CD4-positive, alpha-beta memory T cell (primary cell): ENCODE measurements at regions of chr6 and their contacts with region 1.

Region 1: DNA sequence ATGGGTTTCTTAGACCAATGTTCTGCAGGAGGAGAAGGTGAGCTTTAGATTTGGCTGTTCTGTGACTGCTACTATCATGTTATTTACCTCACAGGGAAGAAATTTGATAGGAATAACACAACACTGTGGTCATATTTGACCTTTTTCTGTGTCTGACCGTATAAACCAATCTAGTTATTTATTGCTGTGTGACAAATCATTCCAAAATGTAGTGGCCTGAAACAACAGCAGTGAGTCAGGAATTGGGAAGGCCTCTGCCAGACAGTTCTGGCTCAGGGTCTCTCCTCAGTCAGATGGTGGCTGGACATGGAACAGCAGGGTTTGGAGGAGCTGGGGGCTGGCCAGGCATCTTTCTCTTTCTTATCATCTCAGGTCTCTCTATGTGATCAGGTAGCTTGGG is 33.0 kb downstream of the RIPOR2 start:
- DNase-seq: no peak
- H3K4me3 ChIP-seq: no peak overlapping the region
- H3K4me3 Mint-ChIP-seq: peak overlapping the region in 6 of 8 donors; percentile 16 to 85 (median 63)
- H3K27ac ChIP-seq: no peak overlapping the region
- H3K27ac Mint-ChIP-seq: peak overlapping the region; percentile 73 to 94 (median 89)
- H3K4me1 ChIP-seq: peaks cover 99% of the 10 kb centered on the region
- H3K4me1 Mint-ChIP-seq: peaks cover 81 to 99% (median 92%) of the 10 kb centered on the region in 4 donors
- H3K27me3 ChIP-seq: no peaks in the 10 kb centered on the region
- H3K27me3 Mint-ChIP-seq: no peaks in the 10 kb centered on the region

Region 2: GRCh38 chr6:24689964-24690363 is 212.8 kb before region 1 on chr6:
- CTCF ChIA-PET with region 1: no interaction called
- POLR2A ChIA-PET with region 1: no interaction called
- intact Hi-C with region 1: no loop called
- DNase-seq: no peak
- H3K4me3 ChIP-seq: no peak overlapping the region
- H3K4me3 Mint-ChIP-seq: no peak overlapping the region
- H3K27ac ChIP-seq: no peak overlapping the region
- H3K27ac Mint-ChIP-seq: no peak overlapping the region
- H3K4me1 ChIP-seq: no peaks in the 10 kb centered on the region
- H3K4me1 Mint-ChIP-seq: peaks cover 0 to 8% (median 4%) of the 10 kb centered on the region in 4 donors
- H3K27me3 ChIP-seq: no peaks in the 10 kb centered on the region
- H3K27me3 Mint-ChIP-seq: no peaks in the 10 kb centered on the region

Region 3: DNA sequence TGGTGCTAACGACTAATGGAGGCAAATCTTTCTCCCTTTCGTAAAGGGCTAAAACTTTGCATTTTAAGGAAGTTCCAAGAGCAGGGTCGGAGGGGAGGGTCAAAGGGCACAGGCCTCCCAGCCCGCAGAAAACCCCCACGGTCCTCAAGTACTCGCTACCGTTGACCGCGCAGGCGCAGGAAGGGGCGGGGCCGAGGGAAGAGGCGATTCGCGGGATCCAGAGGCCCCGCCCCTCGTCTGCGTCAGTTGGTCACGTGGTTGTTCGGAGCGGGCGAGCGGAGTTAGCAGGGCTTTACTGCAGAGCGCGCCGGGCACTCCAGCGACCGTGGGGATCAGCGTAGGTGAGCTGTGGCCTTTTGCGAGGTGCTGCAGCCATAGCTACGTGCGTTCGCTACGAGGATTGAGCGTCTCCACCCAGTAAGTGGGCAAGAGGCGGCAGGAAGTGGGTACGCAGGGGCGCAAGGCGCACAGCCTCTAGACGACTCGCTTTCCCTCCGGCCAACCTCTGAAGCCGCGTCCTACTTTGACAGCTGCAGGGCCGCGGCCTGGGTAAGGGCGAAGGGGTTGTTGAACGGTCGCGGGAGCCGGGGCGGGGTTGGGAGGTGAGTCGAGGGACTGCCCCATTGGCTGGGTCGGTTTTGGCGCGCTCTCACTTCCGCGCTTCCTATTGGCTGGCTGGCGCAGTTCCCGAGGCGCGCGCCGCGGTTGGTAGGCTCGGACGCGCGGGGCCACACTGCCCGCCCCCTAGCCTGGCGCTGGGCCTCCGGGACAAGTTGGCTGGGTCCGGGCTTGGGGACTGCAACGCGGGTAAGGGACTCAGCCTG is 127.9 kb before region 1 on chr6 and contains the start of gene GMNN:
- CTCF ChIA-PET with region 1: no interaction called
- POLR2A ChIA-PET with region 1: no interaction called
- intact Hi-C with region 1: no loop called
- DNase-seq: peak; percentile 93 to 97 (median 95)
- H3K4me3 ChIP-seq: peak within 1 kb of the TSS; percentile 95 to 98
- H3K4me3 Mint-ChIP-seq: peak within 1 kb of the TSS; percentile 98 to 99 (median 99)
- H3K27ac ChIP-seq: peak within 1 kb of the TSS; percentile 85
- H3K27ac Mint-ChIP-seq: peak within 1 kb of the TSS; percentile 97 to 98 (median 98)
- H3K4me1 ChIP-seq: peaks cover 30% of the 10 kb centered on the region
- H3K4me1 Mint-ChIP-seq: peaks cover 16 to 31% (median 18%) of the 10 kb centered on the region in 4 donors
- H3K27me3 ChIP-seq: no peaks in the 10 kb centered on the region
- H3K27me3 Mint-ChIP-seq: no peaks in the 10 kb centered on the region
- total RNA-seq, gene GMNN: 6.1 to 6.7 TPM

Region 4: DNA sequence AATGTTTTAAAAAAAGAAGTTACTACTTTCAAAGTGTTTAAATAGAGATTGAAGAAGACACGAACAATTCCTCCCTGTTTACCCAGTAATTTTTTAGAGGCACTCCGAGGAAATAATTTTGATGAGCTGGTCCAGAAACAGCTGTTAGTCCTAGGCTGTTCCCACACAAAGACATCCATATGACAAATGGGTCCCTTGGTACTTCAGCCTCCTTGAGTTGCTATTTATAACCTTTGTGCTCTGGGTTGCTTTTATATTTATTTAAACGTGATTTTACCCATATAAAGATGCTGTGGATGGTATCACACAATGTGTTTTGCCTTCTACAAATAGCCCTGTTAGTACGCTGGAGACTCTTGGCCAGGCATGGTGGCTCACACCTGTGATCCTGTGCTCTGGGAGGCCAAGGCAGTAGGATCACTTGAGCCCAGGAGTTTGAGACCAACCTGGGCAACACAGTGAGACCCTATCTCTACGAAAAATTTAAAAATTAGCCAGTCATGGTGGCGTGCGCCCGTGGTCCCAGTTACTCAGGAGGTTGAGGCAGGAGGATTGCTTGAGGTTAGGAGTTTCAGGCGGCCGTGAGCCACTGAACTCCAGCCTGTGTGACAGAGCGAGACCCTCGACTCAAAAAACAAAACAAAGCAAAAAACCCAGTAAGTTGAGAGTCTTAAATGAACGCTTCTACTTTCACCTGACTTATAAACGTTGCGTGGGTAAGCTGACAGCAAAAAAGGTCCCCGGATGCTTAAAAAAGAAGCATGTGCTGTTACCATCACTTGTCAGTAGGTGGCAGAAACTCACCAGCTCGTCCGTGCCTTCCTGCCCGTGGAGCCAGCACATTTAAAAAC is 47.2 kb before region 1 on chr6:
- CTCF ChIA-PET with region 1: interaction called, 17 read pairs
- POLR2A ChIA-PET with region 1: interaction called, 3 read pairs
- intact Hi-C with region 1: no loop called
- DNase-seq: peak; percentile 76 to 82 (median 77)
- H3K4me3 ChIP-seq: no peak overlapping the region
- H3K4me3 Mint-ChIP-seq: peak overlapping the region in 5 of 8 donors; percentile 1 to 87 (median 26)
- H3K27ac ChIP-seq: peak overlapping the region; percentile 61
- H3K27ac Mint-ChIP-seq: peak overlapping the region; percentile 82 to 92 (median 90)
- H3K4me1 ChIP-seq: peaks cover 53% of the 10 kb centered on the region
- H3K4me1 Mint-ChIP-seq: peaks cover 48 to 58% (median 50%) of the 10 kb centered on the region in 4 donors
- H3K27me3 ChIP-seq: no peaks in the 10 kb centered on the region
- H3K27me3 Mint-ChIP-seq: no peaks in the 10 kb centered on the region

Region 5: GRCh38 chr6:24864343-24864742 is 38.4 kb before region 1 on chr6:
- CTCF ChIA-PET with region 1: no interaction called
- POLR2A ChIA-PET with region 1: interaction called, 4 read pairs
- intact Hi-C with region 1: loop called (anchors 5 kb)
- DNase-seq: no peak
- H3K4me3 ChIP-seq: no peak overlapping the region
- H3K4me3 Mint-ChIP-seq: peak overlapping the region in 4 of 8 donors; percentile 18 to 63 (median 40)
- H3K27ac ChIP-seq: peak overlapping the region; percentile 14
- H3K27ac Mint-ChIP-seq: peak overlapping the region; percentile 60 to 88 (median 82)
- H3K4me1 ChIP-seq: peaks cover 95% of the 10 kb centered on the region
- H3K4me1 Mint-ChIP-seq: peaks cover 65 to 98% (median 79%) of the 10 kb centered on the region in 4 donors
- H3K27me3 ChIP-seq: no peaks in the 10 kb centered on the region
- H3K27me3 Mint-ChIP-seq: no peaks in the 10 kb centered on the region

Region 6: DNA sequence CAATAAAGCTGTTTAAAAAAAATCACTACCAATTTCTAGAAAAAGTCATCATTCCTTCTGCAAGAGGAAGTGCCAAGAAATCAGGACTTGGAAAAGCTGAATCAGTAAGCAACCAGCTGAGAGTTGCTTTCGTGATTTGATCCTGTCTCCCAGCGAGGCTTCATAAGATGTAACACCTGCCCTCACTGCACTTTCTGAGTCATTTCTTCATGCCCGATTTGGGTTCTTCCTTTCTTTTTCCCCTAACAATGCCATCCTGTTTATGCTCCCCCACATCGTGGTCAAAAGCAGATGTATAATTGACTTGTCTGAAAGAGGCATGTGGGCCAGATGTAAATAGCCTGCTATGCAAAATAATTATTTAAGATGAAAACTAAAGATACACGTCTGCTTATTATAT is 19.2 kb before region 1 on chr6:
- CTCF ChIA-PET with region 1: interaction called, 5 read pairs
- POLR2A ChIA-PET with region 1: interaction called, 19 read pairs
- intact Hi-C with region 1: loop called (anchors 2 kb)
- DNase-seq: peak in 1 of 5 donors; percentile 64
- H3K4me3 ChIP-seq: no peak overlapping the region
- H3K4me3 Mint-ChIP-seq: peak overlapping the region in 6 of 8 donors; percentile 28 to 80 (median 68)
- H3K27ac ChIP-seq: peak overlapping the region; percentile 42
- H3K27ac Mint-ChIP-seq: peak overlapping the region; percentile 49 to 94 (median 88)
- H3K4me1 ChIP-seq: peaks cover 96% of the 10 kb centered on the region
- H3K4me1 Mint-ChIP-seq: peaks cover 59 to 97% (median 80%) of the 10 kb centered on the region in 4 donors
- H3K27me3 ChIP-seq: no peaks in the 10 kb centered on the region
- H3K27me3 Mint-ChIP-seq: no peaks in the 10 kb centered on the region

Region 7: DNA sequence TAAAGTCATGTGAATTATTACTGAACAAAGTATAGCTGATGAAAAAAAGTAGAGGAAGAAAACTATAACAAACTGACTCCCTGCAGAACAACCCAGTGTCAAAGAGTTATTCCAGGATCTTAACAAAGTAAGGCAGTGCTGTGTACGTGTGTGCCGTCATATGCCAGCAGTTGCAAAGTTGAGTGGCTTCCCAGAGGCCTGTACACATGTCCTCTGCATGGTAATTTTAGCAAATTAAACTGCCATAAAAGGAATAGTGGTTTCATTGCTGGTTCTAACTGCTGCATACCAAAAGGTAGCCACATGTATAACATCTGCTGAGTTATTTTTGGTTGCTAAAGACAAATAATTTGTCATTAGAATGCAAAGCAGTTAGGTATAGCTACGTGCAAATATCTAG is 11.8 kb before region 1 on chr6:
- CTCF ChIA-PET with region 1: interaction called, 5 read pairs
- POLR2A ChIA-PET with region 1: interaction called, 19 read pairs
- intact Hi-C with region 1: loop called (anchors 1 kb)
- DNase-seq: no peak
- H3K4me3 ChIP-seq: no peak overlapping the region
- H3K4me3 Mint-ChIP-seq: peak overlapping the region in 7 of 8 donors; percentile 17 to 66 (median 22)
- H3K27ac ChIP-seq: no peak overlapping the region
- H3K27ac Mint-ChIP-seq: peak overlapping the region; percentile 7 to 85 (median 77)
- H3K4me1 ChIP-seq: peaks cover 92% of the 10 kb centered on the region
- H3K4me1 Mint-ChIP-seq: peaks cover 72 to 94% (median 83%) of the 10 kb centered on the region in 4 donors
- H3K27me3 ChIP-seq: no peaks in the 10 kb centered on the region
- H3K27me3 Mint-ChIP-seq: no peaks in the 10 kb centered on the region